ENCODE measurements at regions of chr2 and their contacts with region 1.

Region 1: DNA sequence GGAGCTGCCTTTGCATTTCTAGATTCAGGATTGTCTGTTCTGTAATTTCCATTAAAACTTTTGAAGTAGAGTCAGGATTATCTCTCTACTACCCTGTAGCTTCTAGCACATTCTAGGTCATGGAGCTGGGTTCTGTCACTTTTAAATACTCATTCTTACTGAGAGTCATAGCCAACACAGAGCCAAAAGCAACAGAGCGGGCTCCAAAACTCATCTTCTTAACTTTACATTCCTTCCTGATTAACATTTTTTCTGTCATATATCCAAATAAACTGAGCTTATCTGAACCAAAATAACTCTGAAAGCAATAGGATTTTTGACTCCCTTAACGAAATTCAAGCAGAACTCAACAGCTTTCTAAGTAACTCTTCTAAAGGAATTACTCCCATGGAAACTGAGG is 12.9 kb downstream of the PREPL start:
- DNase-seq: no peak
- ATAC-seq: no peak
- H3K4me3 Mint-ChIP-seq: no peak overlapping the region
- H3K27ac Mint-ChIP-seq: no peak overlapping the region
- H3K4me1 Mint-ChIP-seq: peaks cover 2% of the 10 kb centered on the region
- H3K27me3 Mint-ChIP-seq: no peaks in the 10 kb centered on the region

Region 2: DNA sequence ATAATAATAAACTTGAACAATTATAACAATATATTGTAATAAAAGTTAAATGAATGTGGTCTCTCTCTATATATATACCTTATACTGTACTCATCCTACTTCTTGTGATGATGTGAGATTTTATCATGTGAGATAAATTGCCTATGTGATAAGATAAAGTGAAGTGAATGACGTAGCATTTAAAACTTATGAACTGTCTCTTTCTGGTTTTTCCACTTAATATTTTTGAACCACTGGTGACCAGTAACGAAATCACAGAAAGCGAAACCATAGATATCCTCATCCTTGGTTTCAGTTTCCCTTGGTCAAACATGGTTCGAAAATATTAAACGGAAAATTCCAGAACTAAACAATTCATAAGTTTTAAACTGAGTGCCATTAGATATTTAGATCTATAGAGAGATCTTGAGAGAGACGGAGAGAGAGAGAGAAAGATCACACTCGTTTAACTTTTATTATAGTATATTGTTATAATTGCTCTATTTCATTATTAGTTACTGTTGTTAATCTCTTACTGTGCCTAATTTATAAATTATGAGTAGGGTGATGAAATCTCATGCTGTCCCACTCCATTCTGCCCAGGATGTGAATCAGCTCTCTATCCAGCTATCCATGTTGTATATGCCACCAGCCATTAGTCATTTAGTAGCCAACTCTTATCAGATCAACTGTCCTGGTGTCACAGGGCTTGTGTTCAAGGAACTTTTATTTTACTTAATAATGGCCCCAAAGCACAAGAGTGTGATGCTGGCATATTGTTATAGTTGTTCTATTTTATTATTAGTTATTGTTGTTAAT is 909.3 kb before region 1 on chr2:
- CTCF ChIA-PET with region 1: no interaction called
- DNase-seq: no peak
- ATAC-seq: peak; percentile 12
- H3K4me3 Mint-ChIP-seq: no peak overlapping the region
- H3K27ac Mint-ChIP-seq: no peak overlapping the region
- H3K4me1 Mint-ChIP-seq: peaks cover 9% of the 10 kb centered on the region
- H3K27me3 Mint-ChIP-seq: no peaks in the 10 kb centered on the region

Region 3: DNA sequence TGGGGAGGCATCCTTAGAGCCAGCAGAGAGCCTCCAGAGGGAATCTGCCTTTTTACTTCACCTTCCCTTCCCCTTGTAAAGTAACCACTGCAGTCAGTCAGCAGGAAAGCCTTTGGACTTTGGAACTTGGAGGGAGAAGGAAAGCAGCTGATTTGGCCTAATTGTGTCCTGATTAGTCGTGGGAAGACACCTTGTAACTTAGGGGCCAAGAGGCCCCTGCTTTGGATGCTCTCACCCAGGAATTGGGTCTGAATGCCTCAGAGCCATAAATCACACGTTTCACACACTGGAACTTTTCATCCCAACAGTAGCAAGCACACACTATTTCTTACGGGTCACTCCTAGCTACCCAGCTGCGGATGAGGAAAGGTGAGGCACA is 260.7 kb before region 1 on chr2:
- CTCF ChIA-PET with region 1: no interaction called
- DNase-seq: no peak
- ATAC-seq: no peak
- H3K4me3 Mint-ChIP-seq: peak overlapping the region; percentile 69
- H3K27ac Mint-ChIP-seq: peak overlapping the region; percentile 83
- H3K4me1 Mint-ChIP-seq: peaks cover 38% of the 10 kb centered on the region
- H3K27me3 Mint-ChIP-seq: no peaks in the 10 kb centered on the region

Region 4: GRCh38 chr2:44361330-44362206 is 13.2 kb after region 1 on chr2 and contains the starts of genes CAMKMT and PREPL:
- CTCF ChIA-PET with region 1: interaction called, 10 read pairs
- DNase-seq: peak; percentile 99
- ATAC-seq: peak; percentile 89
- H3K4me3 Mint-ChIP-seq: peak within 1 kb of the TSS; percentile 91
- H3K27ac Mint-ChIP-seq: peak within 1 kb of the TSS; percentile 99
- H3K4me1 Mint-ChIP-seq: peaks cover 46% of the 10 kb centered on the region
- H3K27me3 Mint-ChIP-seq: no peaks in the 10 kb centered on the region
- total RNA-seq, gene CAMKMT: 12.8 to 13.3 TPM
- total RNA-seq, gene PREPL: 20.0 to 23.8 TPM